ENCODE measurements at regions of chr17 and their contacts with region 1.

Region 1: DNA sequence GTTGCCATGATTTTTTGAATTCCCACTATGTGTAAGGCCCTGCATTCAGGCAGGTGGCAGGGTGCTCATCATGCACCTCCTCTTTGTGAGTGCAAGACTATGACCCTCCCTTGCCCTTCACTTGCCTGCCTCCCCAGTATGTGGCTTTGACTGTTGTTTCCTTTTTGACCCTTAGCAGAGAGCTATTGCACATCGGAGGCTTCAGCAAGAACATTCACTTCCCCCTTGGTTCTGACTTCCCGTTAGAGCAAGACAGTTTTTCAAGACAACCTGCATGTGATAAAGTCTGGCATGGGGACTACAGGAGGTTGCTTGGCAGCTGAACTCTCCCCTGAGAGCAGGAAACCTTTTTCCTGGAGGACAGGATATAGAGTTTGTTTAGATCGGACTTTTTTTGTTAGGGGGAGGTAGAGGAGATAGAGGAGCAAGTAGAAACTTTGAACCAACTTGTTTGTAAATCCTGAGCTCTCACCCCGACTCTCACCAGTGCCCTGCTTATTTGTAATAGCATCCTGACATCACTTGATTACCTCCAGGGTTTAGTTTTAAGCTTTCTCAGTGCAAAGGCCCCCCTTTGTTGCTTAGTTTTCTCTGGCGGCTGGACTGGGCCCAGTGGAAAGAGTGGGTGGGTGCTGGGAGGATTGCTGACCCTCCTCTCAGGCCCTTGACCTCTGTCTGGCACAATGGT is 34.3 kb downstream of the LIMD2 start:
- DNase-seq: no peak
- H3K4me3 Mint-ChIP-seq: no peak overlapping the region
- H3K27ac Mint-ChIP-seq: no peak overlapping the region
- H3K4me1 Mint-ChIP-seq: peaks cover 5% of the 10 kb centered on the region
- H3K27me3 Mint-ChIP-seq: no peaks in the 10 kb centered on the region

Region 2: DNA sequence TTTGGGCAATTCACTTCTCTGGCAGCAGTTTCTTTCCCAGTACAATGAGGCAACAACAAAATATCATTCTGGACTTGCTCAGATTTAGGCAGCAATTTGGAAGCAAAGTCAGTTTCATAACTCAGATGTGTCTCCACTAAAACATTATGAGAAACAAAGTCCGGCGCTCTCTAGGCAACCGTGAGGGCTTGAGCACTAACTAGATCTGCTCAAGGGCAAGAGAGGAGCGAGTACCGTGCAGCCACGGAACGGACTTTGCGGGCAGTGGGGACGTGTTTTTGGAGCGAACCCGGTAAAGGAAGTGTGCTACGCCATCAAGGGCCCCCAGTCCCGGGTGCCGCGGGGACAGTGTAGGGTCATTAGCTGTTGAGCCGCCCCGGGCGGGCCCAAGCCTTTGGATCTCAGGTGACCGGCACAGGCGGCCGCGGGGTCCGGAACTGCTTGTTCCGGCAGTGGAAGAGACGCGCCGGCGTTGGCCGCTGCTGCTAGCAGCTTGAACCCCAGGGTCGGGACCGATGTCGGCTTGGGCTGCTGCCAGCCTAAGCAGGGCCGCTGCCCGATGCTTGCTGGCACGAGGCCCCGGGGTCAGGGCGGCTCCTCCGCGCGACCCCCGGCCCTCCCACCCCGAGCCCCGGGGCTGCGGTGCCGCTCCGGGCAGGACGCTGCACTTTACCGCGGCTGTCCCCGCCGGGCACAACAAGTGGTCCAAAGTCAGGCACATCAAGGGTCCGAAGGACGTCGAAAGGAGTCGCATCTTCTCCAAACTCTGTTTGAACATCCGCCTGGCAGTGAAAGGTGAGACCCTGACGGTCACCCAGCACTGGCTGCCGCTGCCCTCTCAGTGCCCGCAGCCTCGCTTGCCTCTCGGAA is 64.9 kb before region 1 on chr17 and contains the start of gene TACO1:
- CTCF ChIA-PET with region 1: no interaction called
- intact Hi-C with region 1: no loop called
- DNase-seq: peak; percentile 88
- H3K4me3 Mint-ChIP-seq: peak within 1 kb of the TSS; percentile 97
- H3K27ac Mint-ChIP-seq: peak within 1 kb of the TSS; percentile 84
- H3K4me1 Mint-ChIP-seq: peaks cover 29% of the 10 kb centered on the region
- H3K27me3 Mint-ChIP-seq: no peaks in the 10 kb centered on the region
- total RNA-seq, gene TACO1: 27.6 to 28.9 TPM

Region 3: GRCh38 chr17:63675607-63676413 is 10.1 kb after region 1 on chr17:
- CTCF ChIA-PET with region 1: interaction called, 11 read pairs
- intact Hi-C with region 1: no loop called
- DNase-seq: no peak
- H3K4me3 Mint-ChIP-seq: no peak overlapping the region
- H3K27ac Mint-ChIP-seq: no peak overlapping the region
- H3K4me1 Mint-ChIP-seq: peaks cover 8% of the 10 kb centered on the region
- H3K27me3 Mint-ChIP-seq: no peaks in the 10 kb centered on the region

Region 4: DNA sequence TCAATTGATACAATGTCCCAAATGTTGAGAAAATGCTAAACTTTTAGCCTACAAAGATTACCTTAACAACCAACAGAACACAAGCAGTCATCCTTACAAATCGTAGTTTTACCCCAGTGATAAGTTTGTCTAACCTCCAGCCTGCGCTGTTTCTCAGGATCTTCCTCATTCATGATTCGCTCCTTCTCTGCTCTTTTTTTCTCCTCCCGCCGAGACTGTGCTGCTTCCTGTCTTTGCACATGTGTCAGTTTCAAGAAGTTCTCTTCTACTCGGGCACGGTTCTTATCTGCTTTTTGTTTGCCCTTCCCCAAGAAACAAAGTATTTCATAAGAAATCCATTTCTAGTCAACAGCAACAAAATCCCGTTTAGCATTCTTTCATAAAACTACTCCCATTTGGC is 86.1 kb after region 1 on chr17:
- CTCF ChIA-PET with region 1: no interaction called
- intact Hi-C with region 1: no loop called
- DNase-seq: peak; percentile 72
- H3K4me3 Mint-ChIP-seq: peak overlapping the region; percentile 62
- H3K27ac Mint-ChIP-seq: peak overlapping the region; percentile 84
- H3K4me1 Mint-ChIP-seq: peaks cover 13% of the 10 kb centered on the region
- H3K27me3 Mint-ChIP-seq: no peaks in the 10 kb centered on the region

Measured in activated naive CD4-positive, alpha-beta T cell treated with anti-CD3 and anti-CD28 coated beads for 36 hours (primary cell).